Mammary epithelial cell (primary cell): ENCODE measurements at regions of chr2 and their contacts with region 1.

Region 1: GRCh38 chr2:65129826-65130663 is at the start of gene RAB1A:
- DNase-seq: peak; percentile 99
- H3K4me3 ChIP-seq: peak within 1 kb of the TSS; percentile 92 to 98 (median 93)
- H3K27ac ChIP-seq: peak within 1 kb of the TSS; percentile 92
- H3K4me1 ChIP-seq: peaks cover 6% of the 10 kb centered on the region
- H3K27me3 ChIP-seq: no peaks in the 10 kb centered on the region
- CTCF ChIP-seq: no peak
- total RNA-seq, gene RAB1A: 76.7 to 158 TPM

Region 2: DNA sequence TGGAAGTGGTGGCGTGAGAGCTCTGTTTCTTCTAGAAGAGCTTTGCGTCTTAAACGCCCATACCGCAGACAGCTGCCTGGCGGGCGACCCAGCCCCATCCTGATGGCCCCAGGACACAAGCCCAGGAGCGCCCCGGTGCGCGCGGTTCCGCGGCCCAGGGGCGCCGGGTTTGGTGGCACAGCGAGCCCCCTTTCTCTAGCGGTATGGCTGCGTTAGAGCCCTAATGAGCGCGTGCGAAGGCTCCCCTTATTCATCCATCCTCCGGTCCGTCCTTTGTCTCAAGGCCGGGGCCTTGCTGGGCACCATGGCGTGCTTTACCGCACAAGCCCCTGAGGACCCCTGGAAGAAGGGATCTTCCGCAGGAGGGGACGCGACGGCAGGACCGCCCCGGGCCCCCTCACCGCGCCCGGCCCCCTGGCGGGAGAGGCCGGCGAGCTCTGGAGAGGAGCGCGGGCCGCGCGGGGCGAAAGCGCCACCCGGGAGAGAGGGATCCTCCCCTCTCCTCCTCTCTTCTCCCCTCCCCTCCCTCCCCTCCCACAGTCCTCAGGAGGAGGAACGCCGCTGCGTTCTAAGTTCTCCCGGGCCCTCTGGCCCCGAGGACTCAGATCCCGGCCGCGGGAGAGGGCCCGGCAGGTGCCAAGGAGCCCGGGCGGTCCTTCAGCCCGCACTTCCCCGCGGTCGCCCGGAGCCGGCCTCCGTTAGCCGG is 141.5 kb before region 1 on chr2:
- CTCF ChIA-PET with region 1: interaction called, 3 read pairs
- dilution Hi-C with region 1: no loop called
- in situ Hi-C with region 1: no loop called
- intact Hi-C with region 1: loop called (anchors 1 kb)
- DNase-seq: peak; percentile 83
- H3K4me3 ChIP-seq: peak overlapping the region; percentile 59 to 69 (median 63)
- H3K27ac ChIP-seq: peak overlapping the region; percentile 40
- H3K4me1 ChIP-seq: peaks cover 19% of the 10 kb centered on the region
- H3K27me3 ChIP-seq: no peaks in the 10 kb centered on the region
- CTCF ChIP-seq: peak; percentile 4 to 47

Region 3: GRCh38 chr2:65103013-65103715 is 26.9 kb before region 1 on chr2:
- CTCF ChIA-PET with region 1: interaction called, 11 read pairs
- dilution Hi-C with region 1: no loop called
- in situ Hi-C with region 1: no loop called
- intact Hi-C with region 1: no loop called
- DNase-seq: no peak
- H3K4me3 ChIP-seq: no peak overlapping the region
- H3K27ac ChIP-seq: no peak overlapping the region
- H3K4me1 ChIP-seq: no peaks in the 10 kb centered on the region
- H3K27me3 ChIP-seq: no peaks in the 10 kb centered on the region
- CTCF ChIP-seq: no peak

Region 4: GRCh38 chr2:65153514-65153913 is 23.5 kb after region 1 on chr2:
- CTCF ChIA-PET with region 1: no interaction called
- dilution Hi-C with region 1: no loop called
- in situ Hi-C with region 1: no loop called
- intact Hi-C with region 1: loop called (anchors 2 kb)
- DNase-seq: peak; percentile 80
- H3K4me3 ChIP-seq: no peak overlapping the region
- H3K27ac ChIP-seq: no peak overlapping the region
- H3K4me1 ChIP-seq: peaks cover 8% of the 10 kb centered on the region
- H3K27me3 ChIP-seq: no peaks in the 10 kb centered on the region
- CTCF ChIP-seq: no peak

Region 5: DNA sequence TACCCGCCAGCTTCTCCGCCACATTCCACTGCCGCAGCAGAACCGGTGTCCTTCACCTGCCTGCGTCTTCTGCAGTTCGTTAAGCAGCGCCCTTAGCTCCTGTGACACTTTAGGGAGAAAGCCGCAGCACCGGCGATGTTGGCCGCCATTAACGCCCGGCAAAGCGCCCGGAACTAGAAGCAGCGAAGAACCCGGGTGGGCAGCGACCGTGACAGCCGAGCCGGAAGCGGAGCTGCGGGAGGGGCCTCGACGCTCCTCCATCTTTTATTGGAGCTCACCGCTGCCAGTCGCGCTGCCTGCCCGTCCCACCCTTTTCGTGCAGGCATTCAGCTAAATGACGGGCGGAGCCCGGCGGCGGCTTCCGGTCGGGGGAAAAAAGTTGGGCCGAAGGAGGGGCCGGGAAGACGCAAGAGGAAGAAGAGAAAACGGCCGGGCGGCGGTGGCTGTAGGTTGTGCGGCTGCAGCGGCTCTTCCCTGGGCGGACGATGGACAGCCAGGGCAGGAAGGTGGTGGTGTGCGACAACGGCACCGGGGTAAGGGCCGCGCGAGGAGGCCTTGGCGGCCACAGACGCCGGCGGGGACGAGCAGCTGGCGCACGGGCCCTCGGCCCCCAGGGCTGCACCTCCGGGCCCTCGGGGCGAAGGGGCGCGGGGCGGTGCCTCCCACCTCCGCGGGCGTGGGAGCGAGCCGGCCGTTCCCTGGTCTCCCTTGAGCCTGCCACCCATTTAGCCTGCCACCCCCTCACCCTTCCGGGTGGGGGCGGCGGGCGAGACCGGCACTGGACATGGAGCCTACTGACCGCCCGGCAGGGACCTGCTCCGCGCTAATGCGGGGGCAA is 97.6 kb after region 1 on chr2 and contains the start of gene ACTR2:
- CTCF ChIA-PET with region 1: no interaction called
- dilution Hi-C with region 1: no loop called
- in situ Hi-C with region 1: no loop called
- intact Hi-C with region 1: loop called (anchors 5 kb)
- DNase-seq: peak; percentile 96
- H3K4me3 ChIP-seq: peak within 1 kb of the TSS; percentile 82 to 97 (median 96)
- H3K27ac ChIP-seq: peak within 1 kb of the TSS; percentile 82
- H3K4me1 ChIP-seq: peaks cover 29% of the 10 kb centered on the region
- H3K27me3 ChIP-seq: no peaks in the 10 kb centered on the region
- CTCF ChIP-seq: no peak
- total RNA-seq, gene ACTR2: 95.0 to 291 TPM